Activated CD8-positive, alpha-beta memory T cell treated with anti-CD3 and anti-CD28 coated beads, Interleukin-2, amount 10 ng/mL, durations not matched to agents 7 days and 5 days (primary cell): ENCODE measurements at regions of chr21 and their contacts with region 1.

Region 1: DNA sequence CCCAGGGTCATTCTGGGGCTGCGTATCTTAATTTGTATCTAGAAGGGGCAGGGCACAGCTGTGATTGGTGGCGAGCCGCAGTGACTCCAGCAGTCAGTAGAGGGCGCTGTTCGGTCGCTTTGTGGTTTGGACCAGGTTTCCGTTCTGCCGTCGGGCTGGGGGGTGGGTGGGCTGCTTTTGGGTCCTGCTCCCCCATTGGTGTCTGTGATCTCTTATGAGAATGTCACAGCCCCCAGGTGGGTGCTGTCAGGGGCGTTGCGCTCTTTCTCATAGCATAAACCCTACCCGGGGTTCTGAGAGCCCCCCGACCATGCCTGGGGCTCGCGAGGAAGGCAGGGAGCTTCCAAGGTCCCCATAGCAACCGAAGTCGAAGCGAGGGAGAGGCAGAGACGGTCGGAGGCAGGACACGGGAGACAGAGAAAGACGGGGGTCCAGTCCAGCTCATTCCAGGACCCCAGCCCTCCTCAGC is 5.4 kb downstream of the TFF3 start:
- DNase-seq: peak; percentile 81
- ATAC-seq: peak; percentile 79
- H3K4me3 Mint-ChIP-seq: no peak overlapping the region
- H3K27ac Mint-ChIP-seq: no peak overlapping the region
- H3K4me1 Mint-ChIP-seq: peaks cover 18% of the 10 kb centered on the region
- H3K27me3 Mint-ChIP-seq: peaks cover 20% of the 10 kb centered on the region

Region 2: DNA sequence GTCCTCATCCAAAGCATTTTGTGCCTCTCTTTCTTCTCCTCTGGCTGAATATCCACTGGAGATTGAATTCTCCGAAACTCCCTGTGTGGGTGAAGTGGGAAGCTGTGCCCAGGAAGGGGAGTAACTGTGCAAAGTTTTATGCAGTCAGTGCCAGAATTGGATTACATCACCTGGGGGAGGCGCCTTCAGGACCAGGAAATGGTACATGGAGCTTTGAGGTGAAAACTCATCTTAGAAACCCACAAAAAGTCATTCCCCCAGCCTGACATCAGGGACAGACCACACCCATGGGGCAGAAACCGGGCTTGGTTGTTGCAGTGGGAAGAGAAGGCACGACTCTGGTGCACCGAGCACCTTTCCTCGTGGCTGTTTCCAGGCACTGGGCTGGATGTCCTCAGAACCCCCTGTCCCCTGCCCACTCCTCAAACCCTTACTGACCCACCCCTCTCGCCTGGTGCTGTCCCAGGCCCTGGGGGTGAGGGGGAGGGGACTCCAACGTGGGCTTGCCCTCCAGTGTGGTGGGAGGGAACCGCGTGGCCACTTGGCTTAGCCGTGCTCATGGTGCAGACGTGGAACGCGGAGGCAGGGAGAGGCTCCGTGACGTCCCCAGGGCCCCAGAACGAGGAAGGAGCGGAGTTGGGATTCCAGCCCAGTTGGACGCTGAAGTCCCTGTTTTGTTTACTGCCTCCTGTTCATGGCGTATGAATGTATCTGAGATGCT is 10.3 kb before region 1 on chr21:
- CTCF ChIA-PET with region 1: interaction called, 15 read pairs
- DNase-seq: peak; percentile 75
- ATAC-seq: peak; percentile 72
- H3K4me3 Mint-ChIP-seq: no peak overlapping the region
- H3K27ac Mint-ChIP-seq: peak overlapping the region; percentile 8
- H3K4me1 Mint-ChIP-seq: peaks cover 19% of the 10 kb centered on the region
- H3K27me3 Mint-ChIP-seq: peaks cover 4% of the 10 kb centered on the region

Region 3: GRCh38 chr21:42337830-42338728 is 28.3 kb after region 1 on chr21:
- CTCF ChIA-PET with region 1: interaction called, 24 read pairs
- DNase-seq: peak; percentile 87
- ATAC-seq: peak; percentile 90
- H3K4me3 Mint-ChIP-seq: no peak overlapping the region
- H3K27ac Mint-ChIP-seq: no peak overlapping the region
- H3K4me1 Mint-ChIP-seq: peaks cover 27% of the 10 kb centered on the region
- H3K27me3 Mint-ChIP-seq: peaks cover 18% of the 10 kb centered on the region